T-cell (primary cell): ENCODE measurements at regions of chr2 and their contacts with region 1.

Region 1: GRCh38 chr2:47147011-47147410 is 8.1 kb downstream of the STPG4 start:
- DNase-seq: no peak
- ATAC-seq: no peak
- H3K4me3 ChIP-seq: no peak overlapping the region
- H3K4me3 Mint-ChIP-seq: no peak overlapping the region
- H3K27ac ChIP-seq: no peak overlapping the region
- H3K27ac Mint-ChIP-seq: no peak overlapping the region
- H3K4me1 ChIP-seq: no peaks in the 10 kb centered on the region
- H3K4me1 Mint-ChIP-seq: no peaks in the 10 kb centered on the region
- H3K27me3 ChIP-seq: no peaks in the 10 kb centered on the region
- H3K27me3 Mint-ChIP-seq: no peaks in the 10 kb centered on the region

Region 2: DNA sequence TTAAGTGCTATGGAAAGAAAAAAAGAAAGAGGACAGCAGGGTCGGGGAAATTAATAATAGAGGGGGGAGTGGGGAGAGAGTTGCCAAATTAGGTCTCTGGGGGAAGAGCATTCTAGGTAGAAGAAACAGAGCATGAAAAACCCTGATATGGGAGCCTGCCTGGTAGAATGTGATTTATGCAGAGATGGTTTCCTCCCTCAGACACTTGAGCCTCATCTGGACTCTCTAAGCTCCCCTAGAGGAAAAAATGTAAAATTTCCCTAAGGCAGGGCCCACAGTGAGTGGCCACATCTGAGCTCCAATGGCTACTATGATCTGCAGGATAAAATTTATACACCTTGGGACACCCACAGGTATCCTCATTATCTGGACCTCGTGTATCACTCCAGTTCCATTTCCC is 870.4 kb before region 1 on chr2:
- CTCF ChIA-PET with region 1: no interaction called
- POLR2A ChIA-PET with region 1: no interaction called
- DNase-seq: no peak
- ATAC-seq: no peak
- H3K4me3 ChIP-seq: no peak overlapping the region
- H3K4me3 Mint-ChIP-seq: peak overlapping the region in 1 of 3 donors; percentile 57
- H3K27ac ChIP-seq: no peak overlapping the region
- H3K27ac Mint-ChIP-seq: no peak overlapping the region
- H3K4me1 ChIP-seq: peaks cover 5 to 9% of the 10 kb centered on the region in 2 experiments
- H3K4me1 Mint-ChIP-seq: peaks cover 9 to 18% (median 10%) of the 10 kb centered on the region in 3 donors
- H3K27me3 ChIP-seq: peaks cover 0 to 14% of the 10 kb centered on the region in 2 experiments
- H3K27me3 Mint-ChIP-seq: peaks cover 15 to 19% of the 10 kb centered on the region in 2 donors

Region 3: GRCh38 chr2:47134386-47135090 is 12.5 kb before region 1 on chr2:
- CTCF ChIA-PET with region 1: no interaction called
- POLR2A ChIA-PET with region 1: no interaction called
- DNase-seq: no peak
- ATAC-seq: no peak
- H3K4me3 ChIP-seq: no peak overlapping the region
- H3K4me3 Mint-ChIP-seq: no peak overlapping the region
- H3K27ac ChIP-seq: no peak overlapping the region
- H3K27ac Mint-ChIP-seq: no peak overlapping the region
- H3K4me1 ChIP-seq: no peaks in the 10 kb centered on the region
- H3K4me1 Mint-ChIP-seq: no peaks in the 10 kb centered on the region
- H3K27me3 ChIP-seq: no peaks in the 10 kb centered on the region
- H3K27me3 Mint-ChIP-seq: no peaks in the 10 kb centered on the region

Region 4: DNA sequence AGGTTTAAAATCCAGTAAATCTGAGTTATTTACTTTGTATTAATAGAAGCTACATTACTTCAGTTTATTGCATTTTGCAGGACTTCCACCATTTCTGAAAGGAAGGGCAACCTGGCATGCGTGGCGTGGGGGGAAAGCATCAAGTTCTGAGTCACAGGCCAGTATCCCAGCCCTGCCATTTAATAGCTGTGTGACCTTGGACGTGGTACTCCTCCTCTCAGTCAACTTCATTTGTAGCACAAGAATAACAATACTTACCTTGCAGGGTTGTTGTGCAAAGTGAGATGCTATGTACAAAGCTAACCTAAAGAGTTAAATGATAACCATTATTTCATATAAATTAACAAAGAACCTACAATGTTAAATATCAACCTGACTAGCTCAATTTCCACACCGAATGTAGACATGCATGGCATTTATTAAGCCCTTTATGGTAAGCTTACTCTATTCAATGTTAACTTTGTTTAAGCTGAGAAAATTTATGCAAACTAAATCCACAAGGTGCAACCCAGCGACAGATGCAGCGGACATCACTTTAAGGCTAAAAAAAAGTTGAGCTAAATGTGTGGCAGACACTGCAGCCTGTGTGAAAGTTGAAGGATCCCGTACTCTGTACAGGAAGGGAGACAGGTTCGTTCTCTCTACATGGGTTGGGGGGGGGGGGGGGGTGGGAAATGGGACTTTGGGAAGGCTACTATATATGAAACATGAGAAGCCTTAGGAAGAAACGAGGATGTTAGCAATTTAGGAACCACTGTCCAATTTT is 25.3 kb after region 1 on chr2:
- CTCF ChIA-PET with region 1: interaction called in 1 of 2 experiments, 4 read pairs
- POLR2A ChIA-PET with region 1: interaction called in 1 of 2 experiments, 10 read pairs
- DNase-seq: no peak
- ATAC-seq: no peak
- H3K4me3 ChIP-seq: no peak overlapping the region
- H3K4me3 Mint-ChIP-seq: peak overlapping the region; percentile 95 to 97 (median 96)
- H3K27ac ChIP-seq: no peak overlapping the region
- H3K27ac Mint-ChIP-seq: peak overlapping the region; percentile 48 to 52
- H3K4me1 ChIP-seq: peaks cover 22 to 40% of the 10 kb centered on the region in 2 experiments
- H3K4me1 Mint-ChIP-seq: peaks cover 72 to 79% (median 77%) of the 10 kb centered on the region in 3 donors
- H3K27me3 ChIP-seq: no peaks in the 10 kb centered on the region
- H3K27me3 Mint-ChIP-seq: peaks cover 0 to 5% of the 10 kb centered on the region in 2 donors